Sigmoid colon (tissue), 7 donors: ENCODE measurements at regions of chr2 and their contacts with region 1.

Region 1: GRCh38 chr2:35410431-35411061 is 945.0 kb upstream of the CRIM1 start:
- DNase-seq: no peak
- H3K4me3 ChIP-seq: no peak overlapping the region
- H3K27ac ChIP-seq: no peak overlapping the region
- H3K4me1 ChIP-seq: no peaks in the 10 kb centered on the region
- H3K27me3 ChIP-seq: no peaks in the 10 kb centered on the region
- CTCF ChIP-seq: peak; percentile 39 to 89 (median 60)
- EP300 ChIP-seq: no peak
- POLR2A ChIP-seq: no peak

Region 2: DNA sequence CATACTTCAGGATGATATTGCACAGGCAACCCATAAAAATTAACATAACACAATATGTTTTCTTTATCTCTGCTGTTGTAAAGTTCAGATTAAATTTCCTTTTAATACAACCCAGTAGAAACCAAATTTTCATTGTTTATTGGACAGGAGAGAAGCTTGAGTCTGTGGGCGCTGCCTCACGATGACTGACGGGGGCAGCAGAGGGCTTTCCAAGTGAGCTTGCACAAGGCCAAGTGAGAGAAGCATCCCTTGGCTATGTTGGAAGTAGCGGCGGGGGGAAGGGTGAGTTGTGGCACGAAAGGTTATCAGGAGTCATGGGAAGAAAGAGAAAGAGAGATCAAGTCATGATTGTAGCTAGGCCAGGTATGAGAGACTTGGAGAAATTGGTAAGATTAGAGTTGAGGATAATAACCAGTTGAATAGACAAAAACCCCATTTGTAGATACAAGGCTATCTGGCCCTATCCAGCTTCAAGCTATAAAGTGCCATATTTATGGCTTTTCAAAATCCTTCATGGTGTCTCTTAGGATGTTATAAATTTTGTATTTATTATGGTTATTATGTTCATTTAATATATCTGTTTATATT is 1397.7 kb before region 1 on chr2:
- intact Hi-C with region 1: loop called (anchors 5 kb)
- DNase-seq: peak; percentile 70
- H3K4me3 ChIP-seq: no peak overlapping the region
- H3K27ac ChIP-seq: no peak overlapping the region
- H3K4me1 ChIP-seq: peaks cover 0 to 13% (median 8%) of the 10 kb centered on the region in 4 donors
- H3K27me3 ChIP-seq: no peaks in the 10 kb centered on the region
- CTCF ChIP-seq: peak in 3 of 4 experiments; percentile 37 to 67 (median 61)
- EP300 ChIP-seq: no peak
- POLR2A ChIP-seq: no peak

Region 3: DNA sequence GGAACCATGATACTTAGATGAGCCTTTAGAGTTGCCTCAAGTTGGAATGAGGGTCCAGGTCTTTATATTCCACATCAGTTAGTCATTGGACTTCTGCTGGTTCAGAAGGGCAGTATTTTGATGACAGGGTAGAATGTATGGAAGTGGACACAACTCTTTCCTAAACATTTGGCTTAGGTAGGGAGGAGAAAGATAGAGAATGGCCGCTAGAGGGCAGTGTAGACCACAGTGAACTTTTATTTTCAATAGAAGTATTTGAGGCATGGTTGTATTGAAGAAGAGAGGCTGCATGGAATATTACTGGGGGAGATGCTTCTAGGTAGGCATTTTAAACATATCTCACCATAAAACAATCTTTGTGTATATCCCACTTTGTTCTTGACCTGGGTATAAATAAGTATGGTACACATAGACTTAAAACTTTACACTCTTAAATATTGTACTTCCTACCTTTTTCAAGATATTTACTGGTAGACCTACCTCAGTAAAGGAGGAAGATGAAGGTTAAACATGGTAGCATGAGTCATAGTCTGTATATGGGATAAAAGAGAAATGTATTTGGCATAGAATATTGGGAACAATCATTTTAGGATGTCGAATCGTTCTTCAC is 1313.9 kb before region 1 on chr2:
- intact Hi-C with region 1: loop called (anchors 5 kb)
- DNase-seq: no peak
- H3K4me3 ChIP-seq: no peak overlapping the region
- H3K27ac ChIP-seq: no peak overlapping the region
- H3K4me1 ChIP-seq: peaks cover 0 to 8% (median 7%) of the 10 kb centered on the region in 4 donors
- H3K27me3 ChIP-seq: no peaks in the 10 kb centered on the region
- CTCF ChIP-seq: peak in 3 of 4 experiments; percentile 48 to 73 (median 59)
- EP300 ChIP-seq: no peak
- POLR2A ChIP-seq: no peak

Region 4: DNA sequence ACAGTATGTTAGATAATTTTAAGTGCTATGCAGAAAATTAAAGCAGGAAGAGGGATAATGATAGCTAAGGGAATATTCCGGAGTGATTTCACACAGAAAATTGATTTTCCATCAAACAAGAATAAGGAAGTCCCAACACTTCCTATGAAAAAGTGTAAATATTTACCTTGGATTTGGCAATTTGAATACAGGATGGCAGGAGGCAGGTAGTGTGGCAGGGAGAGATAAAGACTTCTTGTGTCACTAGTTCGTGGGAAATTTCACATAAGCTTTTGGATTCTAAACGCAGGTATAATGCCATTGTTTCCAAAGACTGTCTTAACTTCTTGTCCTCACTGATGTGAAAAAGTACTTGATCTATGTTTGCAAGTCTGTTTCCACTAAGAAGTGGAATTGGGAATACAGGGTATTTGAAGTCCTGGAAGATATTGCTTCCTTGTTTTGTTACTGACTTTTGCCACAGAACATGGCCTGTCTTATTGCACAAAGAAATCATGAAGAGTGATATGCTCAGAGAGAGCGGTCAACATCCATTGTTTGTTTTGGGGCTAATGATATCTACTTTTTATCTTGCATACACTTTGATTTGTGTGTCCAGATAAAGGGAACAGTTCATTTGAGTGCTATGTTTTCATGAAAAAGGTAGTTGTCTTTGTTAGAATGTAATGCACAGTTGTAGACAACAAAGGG is 595.3 kb before region 1 on chr2:
- intact Hi-C with region 1: no loop called
- DNase-seq: no peak
- H3K4me3 ChIP-seq: no peak overlapping the region
- H3K27ac ChIP-seq: no peak overlapping the region
- H3K4me1 ChIP-seq: no peaks in the 10 kb centered on the region
- H3K27me3 ChIP-seq: no peaks in the 10 kb centered on the region
- CTCF ChIP-seq: no peak
- EP300 ChIP-seq: no peak
- POLR2A ChIP-seq: no peak